ENCODE measurements at regions of chr11 and their contacts with region 1.

Region 1: GRCh38 chr11:61384271-61385242 is 7.8 kb upstream of the TMEM216 start:
- DNase-seq: no peak
- ATAC-seq: no peak
- H3K4me3 ChIP-seq: no peak overlapping the region
- H3K27ac ChIP-seq: no peak overlapping the region
- H3K4me1 ChIP-seq: no peaks in the 10 kb centered on the region
- H3K27me3 ChIP-seq: no peaks in the 10 kb centered on the region
- CTCF ChIP-seq: no peak
- POLR2A ChIP-seq: no peak

Region 2: DNA sequence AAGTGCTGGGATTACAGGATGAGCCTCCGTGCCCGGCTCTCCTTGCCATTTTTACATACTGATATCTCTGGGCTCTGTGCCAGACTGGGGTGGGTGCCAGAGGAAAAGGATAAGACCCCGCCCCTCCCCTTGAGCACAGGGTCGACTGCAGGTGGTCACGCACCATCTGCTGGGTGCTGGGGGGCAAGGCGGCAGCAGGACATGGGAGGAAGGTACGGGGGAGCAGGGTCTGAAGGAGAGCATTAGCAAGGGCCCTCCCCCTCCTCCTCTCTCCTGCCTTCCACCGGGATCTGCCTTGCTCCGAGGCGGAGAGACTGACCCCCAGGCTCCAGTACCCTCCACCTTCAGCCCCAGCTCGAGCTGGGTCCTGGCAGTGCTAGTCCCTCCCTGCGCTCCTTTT is 191.0 kb before region 1 on chr11:
- intact Hi-C with region 1: no loop called
- DNase-seq: no peak
- ATAC-seq: no peak
- H3K4me3 ChIP-seq: no peak overlapping the region
- H3K27ac ChIP-seq: no peak overlapping the region
- H3K4me1 ChIP-seq: no peaks in the 10 kb centered on the region
- H3K27me3 ChIP-seq: no peaks in the 10 kb centered on the region
- CTCF ChIP-seq: no peak
- POLR2A ChIP-seq: no peak

Region 3: GRCh38 chr11:61254403-61255025 is 130.0 kb before region 1 on chr11:
- intact Hi-C with region 1: loop called (anchors 10 kb)
- DNase-seq: peak; percentile 59 to 69 (median 67)
- ATAC-seq: peak; percentile 90
- H3K4me3 ChIP-seq: no peak overlapping the region
- H3K27ac ChIP-seq: no peak overlapping the region
- H3K4me1 ChIP-seq: no peaks in the 10 kb centered on the region
- H3K27me3 ChIP-seq: no peaks in the 10 kb centered on the region
- CTCF ChIP-seq: peak; percentile 74 to 81 (median 78)
- POLR2A ChIP-seq: no peak

Region 4: GRCh38 chr11:61342207-61342803 is 42.3 kb before region 1 on chr11:
- intact Hi-C with region 1: loop called (anchors 5 kb)
- DNase-seq: no peak
- ATAC-seq: no peak
- H3K4me3 ChIP-seq: no peak overlapping the region
- H3K27ac ChIP-seq: no peak overlapping the region
- H3K4me1 ChIP-seq: no peaks in the 10 kb centered on the region
- H3K27me3 ChIP-seq: no peaks in the 10 kb centered on the region
- CTCF ChIP-seq: no peak
- POLR2A ChIP-seq: no peak

Region 5: GRCh38 chr11:61446211-61446651 is 61.7 kb after region 1 on chr11:
- intact Hi-C with region 1: no loop called
- DNase-seq: peak; percentile 83 to 90 (median 88)
- ATAC-seq: peak; percentile 85
- H3K4me3 ChIP-seq: no peak overlapping the region
- H3K27ac ChIP-seq: peak overlapping the region in 1 of 4 donors; percentile 46
- H3K4me1 ChIP-seq: peaks cover 5% of the 10 kb centered on the region
- H3K27me3 ChIP-seq: no peaks in the 10 kb centered on the region
- CTCF ChIP-seq: peak; percentile 33 to 84 (median 72)
- POLR2A ChIP-seq: no peak